MCF 10A (cell line): ENCODE measurements at regions of chr4 and their contacts with region 1.

Region 1: GRCh38 chr4:24210332-24210902 is 320.6 kb upstream of the PPARGC1A start:
- DNase-seq: peak; percentile 98
- H3K4me3 Mint-ChIP-seq: peak overlapping the region; percentile 18
- H3K27ac Mint-ChIP-seq: peak overlapping the region; percentile 85
- H3K4me1 Mint-ChIP-seq: peaks cover 36% of the 10 kb centered on the region
- H3K27me3 Mint-ChIP-seq: no peaks in the 10 kb centered on the region
- CTCF ChIP-seq: no peak

Region 2: DNA sequence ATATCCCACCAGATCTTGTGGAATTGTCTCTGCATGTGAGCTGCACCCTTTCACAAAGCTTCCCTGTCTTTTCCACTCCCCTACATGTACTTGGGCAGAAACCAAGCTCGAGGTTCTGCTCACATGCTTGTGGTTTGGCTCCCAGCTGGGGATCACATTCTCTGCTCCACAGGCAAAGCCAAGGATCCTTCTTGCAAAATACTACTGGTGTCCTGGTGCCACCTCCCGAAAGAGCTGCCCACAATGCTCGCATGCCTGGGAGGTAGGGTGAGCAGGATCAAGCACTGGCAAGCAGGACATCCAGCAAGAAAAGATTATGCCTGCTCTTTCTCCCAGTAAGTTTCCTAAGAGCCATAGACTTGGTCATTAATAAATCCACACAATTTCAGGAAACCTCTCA is 275.5 kb before region 1 on chr4:
- CTCF ChIA-PET with region 1: interaction called, 4 read pairs
- POLR2A ChIA-PET with region 1: interaction called, 13 read pairs
- intact Hi-C with region 1: no loop called
- DNase-seq: peak; percentile 96
- H3K4me3 Mint-ChIP-seq: peak overlapping the region; percentile 46
- H3K27ac Mint-ChIP-seq: peak overlapping the region; percentile 57
- H3K4me1 Mint-ChIP-seq: peaks cover 57% of the 10 kb centered on the region
- H3K27me3 Mint-ChIP-seq: no peaks in the 10 kb centered on the region
- CTCF ChIP-seq: no peak

Region 3: GRCh38 chr4:24105183-24106038 is 105.0 kb before region 1 on chr4:
- CTCF ChIA-PET with region 1: interaction called, 6 read pairs
- POLR2A ChIA-PET with region 1: interaction called, 24 read pairs
- intact Hi-C with region 1: loop called (anchors 1 kb)
- DNase-seq: peak; percentile 96
- H3K4me3 Mint-ChIP-seq: peak overlapping the region; percentile 51
- H3K27ac Mint-ChIP-seq: peak overlapping the region; percentile 98
- H3K4me1 Mint-ChIP-seq: peaks cover 26% of the 10 kb centered on the region
- H3K27me3 Mint-ChIP-seq: no peaks in the 10 kb centered on the region
- CTCF ChIP-seq: no peak

Region 4: GRCh38 chr4:24179201-24179840 is 31.1 kb before region 1 on chr4:
- CTCF ChIA-PET with region 1: no interaction called
- POLR2A ChIA-PET with region 1: interaction called, 10 read pairs
- intact Hi-C with region 1: no loop called
- DNase-seq: no peak
- H3K4me3 Mint-ChIP-seq: no peak overlapping the region
- H3K27ac Mint-ChIP-seq: peak overlapping the region; percentile 6
- H3K4me1 Mint-ChIP-seq: peaks cover 9% of the 10 kb centered on the region
- H3K27me3 Mint-ChIP-seq: no peaks in the 10 kb centered on the region
- CTCF ChIP-seq: no peak

Region 5: GRCh38 chr4:24321151-24321550 is 110.7 kb after region 1 on chr4:
- CTCF ChIA-PET with region 1: no interaction called
- POLR2A ChIA-PET with region 1: interaction called, 18 read pairs
- intact Hi-C with region 1: loop called (anchors 2 kb)
- DNase-seq: peak; percentile 89
- H3K4me3 Mint-ChIP-seq: no peak overlapping the region
- H3K27ac Mint-ChIP-seq: peak overlapping the region; percentile 64
- H3K4me1 Mint-ChIP-seq: peaks cover 39% of the 10 kb centered on the region
- H3K27me3 Mint-ChIP-seq: no peaks in the 10 kb centered on the region
- CTCF ChIP-seq: no peak